PC-3 (cell line): ENCODE measurements at regions of chr1 and their contacts with region 1.

Region 1: DNA sequence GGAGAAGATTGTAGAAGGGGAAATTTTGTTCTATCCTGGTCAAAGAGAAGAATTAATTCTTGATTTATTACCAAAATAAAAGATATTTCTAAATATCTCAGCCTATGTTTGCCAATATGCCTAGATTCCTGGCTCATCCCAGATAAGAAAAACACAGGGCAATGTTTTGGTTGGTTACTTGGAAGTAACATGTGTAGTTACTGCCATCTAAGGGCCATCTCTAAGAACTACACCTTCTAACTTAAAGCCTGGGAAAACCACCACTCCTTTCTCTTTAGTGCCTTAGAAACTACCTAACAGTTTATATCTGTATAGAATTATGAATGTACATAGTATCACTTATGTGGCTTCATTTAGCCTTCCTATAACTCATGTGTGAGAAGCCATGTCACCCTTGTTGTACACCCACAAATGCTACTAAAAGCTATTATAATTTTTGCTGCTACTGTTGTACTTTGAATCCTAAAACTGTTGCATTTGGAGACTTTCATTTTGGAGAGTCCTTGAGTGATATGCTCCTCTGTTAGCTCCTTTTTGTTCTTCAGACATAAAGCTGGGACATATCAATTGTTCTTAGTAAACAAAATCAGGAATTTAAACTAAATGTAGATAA is 4.5 kb downstream of the AIM2 start:
- DNase-seq: peak; percentile 77
- ATAC-seq: peak; percentile 82
- H3K4me3 ChIP-seq: no peak overlapping the region
- H3K27ac ChIP-seq: no peak overlapping the region
- H3K4me1 ChIP-seq: peaks cover 6% of the 10 kb centered on the region
- H3K27me3 ChIP-seq: peaks cover 20% of the 10 kb centered on the region
- CTCF ChIP-seq: peak; percentile 82

Region 2: GRCh38 chr1:157963713-157964112 is 1108.4 kb before region 1 on chr1:
- CTCF ChIA-PET with region 1: no interaction called
- POLR2A ChIA-PET with region 1: no interaction called
- intact Hi-C with region 1: loop called (anchors 5 kb)
- DNase-seq: peak; percentile 87
- ATAC-seq: peak; percentile 81
- H3K4me3 ChIP-seq: no peak overlapping the region
- H3K27ac ChIP-seq: no peak overlapping the region
- H3K4me1 ChIP-seq: peaks cover 22% of the 10 kb centered on the region
- H3K27me3 ChIP-seq: peaks cover 24% of the 10 kb centered on the region
- CTCF ChIP-seq: peak; percentile 87

Region 3: GRCh38 chr1:158203693-158204457 is 868.2 kb before region 1 on chr1:
- CTCF ChIA-PET with region 1: interaction called, 5 read pairs
- POLR2A ChIA-PET with region 1: no interaction called
- intact Hi-C with region 1: loop called (anchors 1 kb)
- DNase-seq: peak; percentile 80
- ATAC-seq: peak; percentile 97
- H3K4me3 ChIP-seq: no peak overlapping the region
- H3K27ac ChIP-seq: no peak overlapping the region
- H3K4me1 ChIP-seq: no peaks in the 10 kb centered on the region
- H3K27me3 ChIP-seq: peaks cover 28% of the 10 kb centered on the region
- CTCF ChIP-seq: peak; percentile 91

Region 4: DNA sequence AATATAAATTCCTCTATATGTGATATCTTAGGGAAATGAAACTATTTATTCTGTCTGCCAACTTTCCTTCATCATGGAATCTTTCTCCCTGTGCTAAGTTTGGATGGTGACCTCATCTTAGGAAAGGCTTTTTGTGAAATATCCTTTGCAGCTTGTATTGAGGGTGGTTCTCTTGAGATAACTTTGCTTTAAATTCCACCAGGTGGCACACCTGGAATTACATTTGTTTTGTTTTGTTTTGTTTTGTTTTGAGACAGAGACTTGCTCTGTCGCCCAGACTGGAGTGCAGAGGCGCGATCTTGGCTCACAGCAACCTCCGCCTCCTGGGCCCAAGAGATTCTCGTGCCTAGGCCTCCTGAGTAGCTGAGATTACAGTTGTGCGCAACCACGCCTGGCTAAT is 825.4 kb before region 1 on chr1:
- CTCF ChIA-PET with region 1: no interaction called
- POLR2A ChIA-PET with region 1: no interaction called
- intact Hi-C with region 1: loop called (anchors 1 kb)
- DNase-seq: peak; percentile 44
- ATAC-seq: peak; percentile 40; the same call in 1 of the 2 replicates
- H3K4me3 ChIP-seq: no peak overlapping the region
- H3K27ac ChIP-seq: no peak overlapping the region
- H3K4me1 ChIP-seq: no peaks in the 10 kb centered on the region
- H3K27me3 ChIP-seq: peaks cover 40% of the 10 kb centered on the region
- CTCF ChIP-seq: peak; percentile 47

Region 5: DNA sequence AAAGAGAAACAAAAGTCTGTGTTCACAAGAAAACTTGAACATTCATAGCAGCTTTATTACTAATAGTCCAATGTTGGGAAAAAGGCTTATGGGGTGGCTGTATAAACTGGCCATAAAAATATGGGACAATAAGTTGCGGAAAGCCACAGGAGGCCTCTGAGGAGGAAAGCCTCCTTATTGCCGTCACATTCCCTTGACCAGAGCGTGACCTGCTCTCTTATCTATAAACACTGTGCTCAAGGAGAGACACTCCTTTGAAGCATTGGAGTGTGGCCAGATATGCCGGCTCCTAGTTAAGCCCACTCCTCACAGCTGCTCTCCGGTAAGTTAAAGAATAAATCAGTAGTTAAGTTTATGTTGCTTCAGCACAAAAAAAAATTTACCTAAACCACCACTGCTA is 537.6 kb before region 1 on chr1:
- CTCF ChIA-PET with region 1: no interaction called
- POLR2A ChIA-PET with region 1: no interaction called
- intact Hi-C with region 1: loop called (anchors 10 kb)
- DNase-seq: no peak
- ATAC-seq: no peak
- H3K4me3 ChIP-seq: no peak overlapping the region
- H3K27ac ChIP-seq: no peak overlapping the region
- H3K4me1 ChIP-seq: no peaks in the 10 kb centered on the region
- H3K27me3 ChIP-seq: peaks cover 30% of the 10 kb centered on the region
- CTCF ChIP-seq: no peak

Region 6: GRCh38 chr1:158793604-158794003 is 278.5 kb before region 1 on chr1:
- CTCF ChIA-PET with region 1: no interaction called
- POLR2A ChIA-PET with region 1: no interaction called
- intact Hi-C with region 1: loop called (anchors 5 kb)
- DNase-seq: no peak
- ATAC-seq: no peak
- H3K4me3 ChIP-seq: no peak overlapping the region
- H3K27ac ChIP-seq: no peak overlapping the region
- H3K4me1 ChIP-seq: no peaks in the 10 kb centered on the region
- H3K27me3 ChIP-seq: no peaks in the 10 kb centered on the region; the same call in 1 of the 2 replicates
- CTCF ChIP-seq: no peak; the same call in 1 of the 2 replicates

Region 7: GRCh38 chr1:158972841-158973240 is 99.2 kb before region 1 on chr1:
- CTCF ChIA-PET with region 1: no interaction called
- POLR2A ChIA-PET with region 1: no interaction called
- intact Hi-C with region 1: no loop called
- DNase-seq: peak; percentile 5
- ATAC-seq: peak; percentile 45; the same call in 1 of the 2 replicates
- H3K4me3 ChIP-seq: no peak overlapping the region
- H3K27ac ChIP-seq: no peak overlapping the region
- H3K4me1 ChIP-seq: no peaks in the 10 kb centered on the region
- H3K27me3 ChIP-seq: peaks cover 5% of the 10 kb centered on the region
- CTCF ChIP-seq: peak; percentile 32; the same call in 1 of the 2 replicates

Region 8: DNA sequence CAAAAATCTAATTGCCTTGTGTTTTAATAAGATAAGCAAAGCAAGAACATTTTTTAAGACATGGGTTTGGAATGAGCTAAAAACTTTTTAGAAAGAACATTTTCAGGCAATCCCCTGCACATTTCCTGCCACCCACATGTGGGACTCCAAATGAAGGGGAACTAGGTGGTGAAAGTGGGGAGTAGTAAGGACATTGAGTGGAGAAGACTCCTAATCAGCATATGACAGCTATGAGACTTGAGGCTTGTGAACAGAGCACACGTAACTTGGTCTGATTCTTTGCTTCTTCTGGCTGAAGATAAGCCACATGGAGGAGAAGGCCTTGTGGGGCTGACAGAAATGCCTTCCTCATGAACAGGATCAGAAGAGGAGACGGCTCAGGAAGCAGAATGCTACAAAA is 280.4 kb after region 1 on chr1:
- CTCF ChIA-PET with region 1: no interaction called
- POLR2A ChIA-PET with region 1: no interaction called
- intact Hi-C with region 1: no loop called
- DNase-seq: no peak
- ATAC-seq: no peak
- H3K4me3 ChIP-seq: no peak overlapping the region
- H3K27ac ChIP-seq: no peak overlapping the region
- H3K4me1 ChIP-seq: no peaks in the 10 kb centered on the region
- H3K27me3 ChIP-seq: peaks cover 20% of the 10 kb centered on the region
- CTCF ChIP-seq: no peak